ENCODE measurements at regions of chr3 and their contacts with region 1.

Region 1: GRCh38 chr3:24605511-24606028 is 110.9 kb upstream of the THRB start:
- DNase-seq: no peak
- H3K4me3 Mint-ChIP-seq: no peak overlapping the region
- H3K27ac Mint-ChIP-seq: no peak overlapping the region
- H3K4me1 Mint-ChIP-seq: no peaks in the 10 kb centered on the region
- H3K27me3 Mint-ChIP-seq: no peaks in the 10 kb centered on the region
- CTCF ChIP-seq: no peak

Region 2: GRCh38 chr3:24591661-24592522 is 13.7 kb before region 1 on chr3:
- CTCF ChIA-PET with region 1: interaction called, 3 read pairs
- POLR2A ChIA-PET with region 1: interaction called, 17 read pairs
- intact Hi-C with region 1: no loop called
- DNase-seq: peak; percentile 93
- H3K4me3 Mint-ChIP-seq: no peak overlapping the region
- H3K27ac Mint-ChIP-seq: peak overlapping the region; percentile 88
- H3K4me1 Mint-ChIP-seq: peaks cover 30% of the 10 kb centered on the region
- H3K27me3 Mint-ChIP-seq: no peaks in the 10 kb centered on the region
- CTCF ChIP-seq: no peak

Measured in MCF 10A (cell line).